Psoas muscle (tissue), 8 donors: ENCODE measurements at regions of chr1 and their contacts with region 1.

Region 1: DNA sequence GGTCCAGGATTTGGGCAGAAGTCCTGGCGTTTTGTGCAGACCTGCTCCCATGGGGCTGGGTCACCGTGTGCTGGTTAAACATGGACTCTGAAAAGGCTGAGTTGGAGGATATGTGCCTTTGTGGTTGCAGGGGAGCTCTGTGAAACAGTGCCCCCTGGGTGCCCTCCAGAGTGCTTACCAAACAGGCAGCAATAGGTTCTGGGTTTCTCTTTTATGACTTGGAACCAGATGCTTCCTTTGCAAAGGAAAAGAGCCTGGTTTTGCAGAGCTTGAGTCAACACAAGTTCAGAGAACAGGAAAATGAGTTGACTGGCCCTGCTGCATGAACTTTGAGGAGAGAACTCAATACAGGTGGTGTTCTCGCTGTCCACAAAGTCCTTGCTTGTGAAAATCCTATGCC is 288.9 kb downstream of the TM2D1 start:
- DNase-seq: no peak
- ATAC-seq: peak in 3 of 4 donors; percentile 30 to 48 (median 35)
- H3K4me3 ChIP-seq: no peak overlapping the region
- H3K27ac ChIP-seq: no peak overlapping the region
- H3K4me1 ChIP-seq: peaks cover 4% of the 10 kb centered on the region
- H3K27me3 ChIP-seq: no peaks in the 10 kb centered on the region
- CTCF ChIP-seq: peak; percentile 8

Region 2: GRCh38 chr1:61403679-61404596 is 32.1 kb before region 1 on chr1:
- intact Hi-C with region 1: loop called in 1 of 2 experiments (anchors 5 kb)
- DNase-seq: no peak
- ATAC-seq: peak in 3 of 4 donors; percentile 50 to 72 (median 71)
- H3K4me3 ChIP-seq: peak overlapping the region; percentile 11
- H3K27ac ChIP-seq: peak overlapping the region; percentile 69
- H3K4me1 ChIP-seq: peaks cover 34% of the 10 kb centered on the region
- H3K27me3 ChIP-seq: no peaks in the 10 kb centered on the region
- CTCF ChIP-seq: no peak